ENCODE measurements at regions of chr7 and their contacts with region 1.

Region 1: GRCh38 chr7:107563775-107564552 is at the starts of genes COG5 and DUS4L:
- DNase-seq: peak; percentile 78 to 88 (median 84)
- ATAC-seq: peak; percentile 91
- H3K4me3 ChIP-seq: peak within 1 kb of the TSS; percentile 86
- H3K4me3 Mint-ChIP-seq: peak within 1 kb of the TSS; percentile 76 to 99 (median 91)
- H3K27ac ChIP-seq: peak within 1 kb of the TSS; percentile 98
- H3K27ac Mint-ChIP-seq: peak within 1 kb of the TSS; percentile 87 to 97 (median 93)
- H3K4me1 ChIP-seq: peaks cover 40 to 50% of the 10 kb centered on the region in 2 donors
- H3K4me1 Mint-ChIP-seq: peaks cover 40 to 76% (median 62%) of the 10 kb centered on the region in 7 donors
- H3K27me3 ChIP-seq: no peaks in the 10 kb centered on the region
- H3K27me3 Mint-ChIP-seq: no peaks in the 10 kb centered on the region
- total RNA-seq, gene COG5: 38.3 to 77.0 (median 60.7) TPM
- total RNA-seq, gene DUS4L: 10.0 to 14.1 (median 11.2) TPM

Region 2: DNA sequence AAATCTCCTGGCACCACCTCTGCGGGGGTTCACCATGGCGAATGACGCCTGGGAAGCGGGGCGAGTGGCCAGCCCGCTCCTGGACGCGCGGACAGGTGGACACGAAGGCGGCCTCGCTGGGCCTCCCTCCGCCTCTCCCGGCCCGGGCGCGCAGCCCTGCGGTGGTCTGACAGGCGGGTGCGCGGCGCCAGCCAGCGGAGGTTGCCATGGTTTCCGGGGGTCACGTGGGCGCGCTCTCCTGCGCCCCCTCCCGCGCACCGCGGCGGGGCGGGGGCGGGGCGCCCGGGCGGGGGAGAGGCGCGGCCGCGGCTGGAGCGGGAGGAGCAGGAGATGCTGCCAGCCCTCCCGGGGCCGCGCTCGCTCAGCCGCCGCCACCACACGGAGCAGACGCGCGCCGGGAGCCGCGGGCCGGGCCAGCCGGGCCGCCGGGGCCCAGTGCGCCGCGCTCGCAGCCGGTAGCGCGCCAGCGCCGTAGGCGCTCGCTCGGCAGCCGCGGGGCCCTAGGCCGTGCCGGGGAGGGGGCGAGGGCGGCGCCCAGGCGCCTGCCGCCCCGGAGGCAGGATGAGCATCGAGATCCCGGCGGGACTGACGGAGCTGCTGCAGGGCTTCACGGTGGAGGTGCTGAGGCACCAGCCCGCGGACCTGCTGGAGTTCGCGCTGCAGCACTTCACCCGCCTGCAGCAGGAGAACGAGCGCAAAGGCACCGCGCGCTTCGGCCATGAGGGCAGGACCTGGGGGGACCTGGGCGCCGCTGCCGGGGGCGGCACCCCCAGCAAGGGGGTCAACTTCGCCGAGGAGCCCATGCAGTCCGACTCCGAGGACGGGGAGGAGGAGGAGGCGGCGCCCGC is 519.4 kb before region 1 on chr7 and contains the start of gene PRKAR2B:
- CTCF ChIA-PET with region 1: no interaction called
- POLR2A ChIA-PET with region 1: no interaction called
- intact Hi-C with region 1: loop called in 1 of 2 experiments (anchors 5 kb)
- DNase-seq: peak; percentile 69 to 81 (median 79)
- ATAC-seq: peak; percentile 96
- H3K4me3 ChIP-seq: peak within 1 kb of the TSS; percentile 53
- H3K4me3 Mint-ChIP-seq: peak within 1 kb of the TSS; percentile 78 to 96 (median 90)
- H3K27ac ChIP-seq: peak within 1 kb of the TSS; percentile 33
- H3K27ac Mint-ChIP-seq: peak within 1 kb of the TSS in 7 of 9 donors; percentile 48 to 89 (median 77)
- H3K4me1 ChIP-seq: peaks cover 4 to 10% of the 10 kb centered on the region in 2 donors
- H3K4me1 Mint-ChIP-seq: peaks cover 11 to 19% (median 15%) of the 10 kb centered on the region in 7 donors
- H3K27me3 ChIP-seq: peaks cover 4 to 8% of the 10 kb centered on the region in 2 donors
- H3K27me3 Mint-ChIP-seq: peaks cover 13 to 47% (median 29%) of the 10 kb centered on the region in 5 donors
- total RNA-seq, gene PRKAR2B: 0.43 to 5.0 (median 0.67) TPM

Region 3: GRCh38 chr7:107462740-107463444 is 101.1 kb before region 1 on chr7:
- CTCF ChIA-PET with region 1: no interaction called
- POLR2A ChIA-PET with region 1: interaction called, 3 read pairs
- intact Hi-C with region 1: loop called in 1 of 2 experiments (anchors 5 kb)
- DNase-seq: peak; percentile 10 to 47 (median 36)
- ATAC-seq: peak; percentile 82
- H3K4me3 ChIP-seq: no peak overlapping the region
- H3K4me3 Mint-ChIP-seq: no peak overlapping the region
- H3K27ac ChIP-seq: no peak overlapping the region
- H3K27ac Mint-ChIP-seq: peak overlapping the region in 1 of 9 donors; percentile 19
- H3K4me1 ChIP-seq: no peaks in the 10 kb centered on the region
- H3K4me1 Mint-ChIP-seq: peaks cover 0 to 6% (median 0%) of the 10 kb centered on the region in 7 donors
- H3K27me3 ChIP-seq: no peaks in the 10 kb centered on the region
- H3K27me3 Mint-ChIP-seq: no peaks in the 10 kb centered on the region

Region 4: DNA sequence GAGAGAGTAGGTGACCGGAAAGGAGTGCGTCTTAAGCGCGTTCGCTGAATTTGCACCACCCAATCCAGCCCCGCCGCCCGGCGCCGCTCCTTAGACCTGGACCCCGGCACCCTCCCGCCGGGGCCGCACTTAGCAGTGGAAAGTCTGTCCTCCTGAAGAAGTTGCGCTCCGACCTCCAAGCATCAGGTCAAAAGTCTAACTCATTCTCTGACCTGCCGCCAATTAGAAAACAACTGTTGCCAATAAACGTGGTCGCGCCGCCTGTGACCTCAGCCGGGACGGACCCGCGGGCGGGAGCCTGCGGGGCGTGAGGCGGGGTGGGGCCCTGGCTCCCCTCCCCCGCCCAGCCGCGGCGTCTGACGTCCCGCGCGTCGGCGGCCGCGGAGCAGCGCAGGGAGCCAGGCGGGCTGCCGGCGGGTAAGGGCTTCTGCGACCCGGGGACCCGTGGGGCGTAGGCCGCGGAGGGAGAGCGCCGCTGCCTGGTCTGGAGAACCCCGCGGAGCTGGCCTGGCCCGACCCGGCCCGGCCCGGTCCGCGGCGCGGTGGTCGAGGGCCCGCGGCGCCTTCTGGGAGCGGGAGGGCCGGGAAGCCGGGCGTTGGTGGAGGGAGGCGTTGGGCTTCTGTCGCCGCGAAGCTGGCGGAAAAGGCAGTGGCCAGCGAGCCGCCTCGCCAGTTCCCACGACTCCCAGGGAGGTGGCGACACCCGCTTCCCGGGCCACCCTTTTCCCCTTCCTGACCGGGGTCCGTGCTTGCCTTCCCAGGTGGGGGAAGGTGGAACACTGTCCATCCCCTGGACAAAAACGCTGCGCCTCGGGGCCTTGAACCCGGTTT is 16.1 kb after region 1 on chr7 and contains the start of gene BCAP29:
- CTCF ChIA-PET with region 1: interaction called, 3 read pairs
- POLR2A ChIA-PET with region 1: interaction called, 15 read pairs
- intact Hi-C with region 1: loop called (anchors 1 kb)
- DNase-seq: peak; percentile 50 to 83 (median 65)
- ATAC-seq: peak; percentile 98
- H3K4me3 ChIP-seq: peak within 1 kb of the TSS; percentile 97
- H3K4me3 Mint-ChIP-seq: peak within 1 kb of the TSS; percentile 83 to 94 (median 90)
- H3K27ac ChIP-seq: peak within 1 kb of the TSS; percentile 72
- H3K27ac Mint-ChIP-seq: peak within 1 kb of the TSS; percentile 43 to 93 (median 87)
- H3K4me1 ChIP-seq: peaks cover 4 to 8% of the 10 kb centered on the region in 2 donors
- H3K4me1 Mint-ChIP-seq: peaks cover 6 to 34% (median 25%) of the 10 kb centered on the region in 7 donors
- H3K27me3 ChIP-seq: no peaks in the 10 kb centered on the region
- H3K27me3 Mint-ChIP-seq: no peaks in the 10 kb centered on the region
- total RNA-seq, gene BCAP29: 10.5 to 38.7 (median 14.4) TPM

Region 5: GRCh38 chr7:107638594-107638993 is 74.6 kb after region 1 on chr7:
- CTCF ChIA-PET with region 1: no interaction called
- POLR2A ChIA-PET with region 1: no interaction called
- intact Hi-C with region 1: loop called in 1 of 2 experiments (anchors 5 kb)
- DNase-seq: no peak
- ATAC-seq: no peak
- H3K4me3 ChIP-seq: no peak overlapping the region
- H3K4me3 Mint-ChIP-seq: peak overlapping the region in 1 of 10 donors; percentile 52
- H3K27ac ChIP-seq: no peak overlapping the region
- H3K27ac Mint-ChIP-seq: peak overlapping the region in 1 of 9 donors; percentile 45
- H3K4me1 ChIP-seq: no peaks in the 10 kb centered on the region
- H3K4me1 Mint-ChIP-seq: peaks cover 0 to 56% (median 0%) of the 10 kb centered on the region in 7 donors
- H3K27me3 ChIP-seq: no peaks in the 10 kb centered on the region
- H3K27me3 Mint-ChIP-seq: peaks cover 0 to 34% (median 9%) of the 10 kb centered on the region in 5 donors

Region 6: GRCh38 chr7:107890962-107891635 is 327.1 kb after region 1 on chr7 and contains the start of gene DLD:
- CTCF ChIA-PET with region 1: no interaction called
- POLR2A ChIA-PET with region 1: interaction called, 6 read pairs
- intact Hi-C with region 1: loop called (anchors 2 to 5 kb)
- DNase-seq: peak; percentile 89 to 94 (median 93)
- ATAC-seq: peak; percentile 98
- H3K4me3 ChIP-seq: peak within 1 kb of the TSS; percentile 93
- H3K4me3 Mint-ChIP-seq: peak within 1 kb of the TSS; percentile 89 to 100 (median 97)
- H3K27ac ChIP-seq: peak within 1 kb of the TSS; percentile 97
- H3K27ac Mint-ChIP-seq: peak within 1 kb of the TSS; percentile 94 to 100 (median 98)
- H3K4me1 ChIP-seq: peaks cover 5 to 35% of the 10 kb centered on the region in 2 donors
- H3K4me1 Mint-ChIP-seq: peaks cover 20 to 55% (median 52%) of the 10 kb centered on the region in 7 donors
- H3K27me3 ChIP-seq: no peaks in the 10 kb centered on the region
- H3K27me3 Mint-ChIP-seq: peaks cover 0 to 3% (median 0%) of the 10 kb centered on the region in 5 donors
- total RNA-seq, gene DLD: 44.5 to 69.3 (median 53.7) TPM

Region 7: DNA sequence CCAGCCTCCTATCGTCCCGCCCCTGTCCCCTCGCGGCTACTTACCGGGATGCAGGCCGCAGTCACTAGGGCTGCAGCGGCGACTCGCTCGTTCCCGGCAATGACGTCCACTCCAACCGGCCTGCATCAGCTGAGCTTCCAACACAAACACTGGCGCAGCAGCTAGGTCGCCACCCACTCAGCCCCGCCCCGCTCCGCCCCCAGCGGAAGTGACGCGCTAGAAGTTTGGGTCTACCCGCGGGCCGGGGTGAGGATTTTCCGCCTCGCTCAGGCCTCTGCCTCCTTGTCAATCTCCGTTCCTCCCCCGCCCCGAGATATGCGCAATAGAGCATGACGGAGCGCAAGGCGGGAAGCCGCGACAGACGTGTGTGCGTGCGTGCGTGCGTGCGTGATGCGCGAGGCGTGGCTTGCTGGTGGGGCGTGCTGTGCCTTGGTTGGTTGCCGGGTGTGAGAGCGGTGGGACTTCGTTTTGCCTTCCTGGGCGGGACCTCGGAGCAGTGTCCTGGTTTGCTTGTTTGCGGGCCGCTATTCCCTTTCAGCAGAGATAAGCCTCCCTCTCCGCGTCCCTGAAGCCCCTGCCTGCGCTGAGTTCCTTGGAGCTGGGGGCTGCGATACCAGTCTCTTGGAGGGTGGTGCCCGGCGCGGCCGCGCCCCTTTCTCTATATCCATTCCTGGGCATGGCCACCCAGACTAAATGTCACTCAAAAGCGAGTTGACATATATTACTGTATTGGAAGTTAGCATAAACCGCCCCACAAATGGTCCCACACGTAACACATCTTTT is 962.2 kb after region 1 on chr7 and contains the start of gene PNPLA8:
- CTCF ChIA-PET with region 1: no interaction called
- POLR2A ChIA-PET with region 1: no interaction called
- intact Hi-C with region 1: loop called (anchors 1 to 5 kb)
- DNase-seq: peak; percentile 100
- ATAC-seq: peak; percentile 94
- H3K4me3 ChIP-seq: peak within 1 kb of the TSS; percentile 94
- H3K4me3 Mint-ChIP-seq: peak within 1 kb of the TSS; percentile 84 to 98 (median 97)
- H3K27ac ChIP-seq: peak within 1 kb of the TSS; percentile 89
- H3K27ac Mint-ChIP-seq: peak within 1 kb of the TSS; percentile 97 to 100 (median 99)
- H3K4me1 ChIP-seq: peaks cover 18% of the 10 kb centered on the region in 2 donors
- H3K4me1 Mint-ChIP-seq: peaks cover 18 to 46% (median 33%) of the 10 kb centered on the region in 7 donors
- H3K27me3 ChIP-seq: no peaks in the 10 kb centered on the region
- H3K27me3 Mint-ChIP-seq: peaks cover 0 to 4% (median 0%) of the 10 kb centered on the region in 5 donors
- total RNA-seq, gene PNPLA8: 18.5 to 89.9 (median 29.8) TPM

Measured in naive thymus-derived CD4-positive, alpha-beta T cell (primary cell).